Naive thymus-derived CD4-positive, alpha-beta T cell (primary cell): ENCODE measurements at regions of chr1 and their contacts with region 1.

Region 1: DNA sequence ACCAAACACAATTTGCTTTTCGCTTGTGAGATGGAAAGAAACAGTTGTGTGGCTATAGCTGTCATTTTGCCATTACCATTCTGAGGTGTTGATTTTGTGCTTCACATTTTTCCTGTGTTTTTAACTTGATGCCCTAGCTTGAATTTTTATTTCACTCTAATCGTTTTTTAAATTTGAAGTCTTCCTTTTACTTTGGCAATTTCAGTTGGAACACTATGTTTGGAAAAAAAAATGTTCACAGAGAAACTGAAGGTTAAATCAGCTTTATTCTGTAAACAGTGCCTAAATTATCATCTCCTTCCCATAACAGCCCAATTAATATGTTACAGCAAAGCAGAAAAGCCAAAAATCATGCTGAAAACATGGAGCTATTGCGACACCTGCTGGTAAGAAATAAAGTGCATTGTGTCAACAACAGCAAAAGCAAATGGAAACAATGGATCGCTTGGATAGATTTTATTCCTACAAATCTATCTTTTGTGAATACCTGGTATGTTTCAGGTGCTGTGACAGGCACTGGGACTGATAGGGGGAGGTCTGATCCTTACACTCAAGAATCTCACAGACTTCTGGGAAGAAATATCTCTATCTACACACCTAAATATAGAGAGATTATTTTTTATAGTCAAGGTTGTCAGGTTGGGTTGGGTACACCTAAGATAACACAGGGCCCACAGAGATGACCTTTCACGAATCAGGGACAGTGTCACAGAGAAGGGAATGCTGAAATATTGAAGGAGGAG is 16.2 kb upstream of the ERICH3 start:
- DNase-seq: peak in 7 of 9 donors; percentile 4 to 51 (median 37)
- ATAC-seq: no peak
- H3K4me3 ChIP-seq: no peak overlapping the region
- H3K4me3 Mint-ChIP-seq: no peak overlapping the region
- H3K27ac ChIP-seq: no peak overlapping the region
- H3K27ac Mint-ChIP-seq: peak overlapping the region in 1 of 9 donors; percentile 1
- H3K4me1 ChIP-seq: no peaks in the 10 kb centered on the region
- H3K4me1 Mint-ChIP-seq: peaks cover 0 to 6% (median 0%) of the 10 kb centered on the region in 7 donors
- H3K27me3 ChIP-seq: no peaks in the 10 kb centered on the region
- H3K27me3 Mint-ChIP-seq: peaks cover 0 to 7% (median 0%) of the 10 kb centered on the region in 5 donors

Region 2: DNA sequence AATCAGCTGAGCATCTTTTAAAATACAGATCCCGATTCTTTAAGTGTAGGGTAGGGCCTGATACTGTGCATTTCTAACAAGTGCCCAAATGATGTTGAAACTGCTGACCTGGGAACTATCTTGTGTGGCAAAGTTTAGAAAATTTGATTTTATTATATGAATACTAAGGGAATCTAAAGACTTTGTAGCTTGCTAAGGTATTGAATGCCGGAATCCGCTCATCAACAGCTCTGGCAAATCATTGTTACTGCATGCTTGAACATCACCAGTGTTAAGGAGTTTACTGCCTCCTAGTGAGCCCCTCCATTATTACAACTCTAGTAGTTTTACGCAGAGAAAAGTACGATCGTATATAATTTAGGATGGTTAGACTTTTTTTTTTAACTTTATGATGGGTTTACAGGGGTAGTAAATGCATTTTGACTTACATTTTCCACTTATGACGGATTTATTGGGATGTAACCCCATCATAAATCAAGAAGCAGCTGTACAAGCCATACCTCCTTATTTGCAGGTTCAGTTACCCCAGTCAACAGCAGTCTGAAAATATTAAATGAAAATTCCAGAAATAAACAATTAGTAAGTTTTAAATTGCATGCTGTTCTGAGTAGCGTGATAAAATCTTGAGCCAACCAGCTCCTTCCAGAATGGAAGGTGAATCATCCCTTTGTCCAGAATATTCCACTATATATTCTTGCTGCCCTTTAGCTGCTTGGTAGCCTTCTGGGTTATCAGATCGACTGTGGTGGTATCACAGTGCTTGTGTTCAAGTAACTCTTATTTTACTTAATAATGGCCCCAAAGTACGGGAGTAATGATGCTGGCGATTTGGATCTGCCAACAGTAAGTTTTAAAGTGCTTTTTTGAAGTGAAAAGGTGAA is 44.1 kb after region 1 on chr1:
- CTCF ChIA-PET with region 1: interaction called, 4 read pairs
- POLR2A ChIA-PET with region 1: no interaction called
- intact Hi-C with region 1: loop called in 1 of 2 experiments (anchors 1 kb)
- DNase-seq: peak in 7 of 9 donors; percentile 55 to 75 (median 67)
- ATAC-seq: peak; percentile 85
- H3K4me3 ChIP-seq: peak overlapping the region; percentile 93
- H3K4me3 Mint-ChIP-seq: peak overlapping the region; percentile 84 to 100 (median 98)
- H3K27ac ChIP-seq: peak overlapping the region; percentile 76
- H3K27ac Mint-ChIP-seq: peak overlapping the region; percentile 92 to 99 (median 95)
- H3K4me1 ChIP-seq: peaks cover 21 to 24% of the 10 kb centered on the region in 2 donors
- H3K4me1 Mint-ChIP-seq: peaks cover 22 to 64% (median 43%) of the 10 kb centered on the region in 7 donors
- H3K27me3 ChIP-seq: no peaks in the 10 kb centered on the region
- H3K27me3 Mint-ChIP-seq: no peaks in the 10 kb centered on the region